PC-9 (cell line): ENCODE measurements at regions of chr4 and their contacts with region 1.

Region 1: DNA sequence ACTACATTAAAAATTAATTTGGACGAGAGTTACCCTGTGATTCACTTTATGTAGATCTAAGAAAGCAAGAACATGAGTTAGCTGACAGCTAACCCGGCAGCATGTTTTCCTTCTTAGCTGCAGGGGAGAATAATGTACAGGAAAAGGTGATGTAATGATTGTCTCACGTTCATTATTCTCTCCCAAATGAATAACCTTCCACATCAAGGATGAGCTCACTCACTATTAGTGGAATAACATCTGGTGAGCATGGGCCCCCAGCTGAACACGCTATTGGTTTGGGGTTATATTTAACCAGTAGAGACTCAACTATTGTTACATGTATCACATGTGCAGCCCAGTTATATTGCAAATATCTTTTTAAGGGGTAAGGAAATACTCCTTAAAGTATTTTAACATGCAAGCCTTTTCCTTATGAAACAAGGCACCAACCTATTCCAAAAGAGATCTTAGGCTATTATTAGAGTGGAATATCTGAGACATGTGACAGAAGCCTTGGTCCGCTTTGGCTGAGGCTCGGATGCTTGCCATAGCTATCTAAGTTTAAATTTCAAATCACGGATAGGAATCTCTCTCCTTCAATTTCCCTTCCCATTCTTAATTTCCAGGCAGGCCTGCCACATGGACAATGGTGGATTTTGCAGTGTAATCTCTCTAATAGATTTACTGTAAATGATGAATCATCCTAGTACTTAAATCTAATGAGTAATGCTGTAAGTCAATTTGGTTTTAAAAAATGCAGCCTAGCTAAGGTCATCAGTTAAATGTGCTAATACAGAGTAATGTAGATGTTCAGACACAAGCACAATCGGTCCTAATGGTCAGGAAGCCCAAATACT is 99.0 kb upstream of the OTUD4 start:
- DNase-seq: no peak
- H3K4me3 ChIP-seq: no peak overlapping the region
- H3K27ac ChIP-seq: no peak overlapping the region
- H3K4me1 ChIP-seq: no peaks in the 10 kb centered on the region
- H3K27me3 ChIP-seq: no peaks in the 10 kb centered on the region
- CTCF ChIP-seq: no peak

Region 2: DNA sequence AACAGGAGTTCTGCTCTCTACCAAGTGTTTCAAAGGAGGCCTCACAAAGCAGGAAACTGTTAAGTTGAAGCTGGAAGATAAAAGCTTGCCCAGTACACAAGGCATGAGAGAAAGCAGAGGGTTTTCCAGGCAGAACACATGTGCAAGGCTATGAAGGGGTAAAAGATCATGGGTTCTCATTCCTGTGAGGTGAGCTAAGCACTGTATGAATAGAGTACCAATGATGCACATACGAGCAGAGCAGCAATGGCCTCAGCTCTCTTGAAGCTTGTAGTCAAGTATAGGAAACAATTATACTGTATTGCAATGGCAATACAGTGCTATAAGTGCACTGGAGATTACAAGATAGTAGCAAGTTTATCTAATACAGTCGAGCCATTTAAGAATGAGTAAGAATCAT is 1648.4 kb after region 1 on chr4:
- CTCF ChIA-PET with region 1: no interaction called
- POLR2A ChIA-PET with region 1: interaction called, 10 read pairs
- intact Hi-C with region 1: no loop called
- DNase-seq: no peak
- H3K4me3 ChIP-seq: no peak overlapping the region
- H3K27ac ChIP-seq: no peak overlapping the region
- H3K4me1 ChIP-seq: no peaks in the 10 kb centered on the region
- H3K27me3 ChIP-seq: no peaks in the 10 kb centered on the region
- CTCF ChIP-seq: no peak